ENCODE measurements at regions of chr5 and their contacts with region 1.

Region 1: GRCh38 chr5:36739751-36740221 is 133.4 kb downstream of the SLC1A3 start:
- DNase-seq: peak; percentile 85
- H3K4me3 ChIP-seq: no peak overlapping the region
- H3K27ac ChIP-seq: peak overlapping the region in 4 of 5 donors; percentile 12 to 70 (median 56)
- H3K4me1 ChIP-seq: peaks cover 6 to 47% (median 35%) of the 10 kb centered on the region in 4 donors
- H3K27me3 ChIP-seq: peaks cover 0 to 6% (median 0%) of the 10 kb centered on the region in 3 donors
- CTCF ChIP-seq: peak in 5 of 7 experiments; percentile 76 to 86 (median 85)
- EP300 ChIP-seq: no peak
- POLR2A ChIP-seq: no peak

Region 2: GRCh38 chr5:36599986-36600779 is 139.6 kb before region 1 on chr5:
- intact Hi-C with region 1: no loop called
- DNase-seq: no peak
- H3K4me3 ChIP-seq: no peak overlapping the region
- H3K27ac ChIP-seq: no peak overlapping the region
- H3K4me1 ChIP-seq: no peaks in the 10 kb centered on the region
- H3K27me3 ChIP-seq: no peaks in the 10 kb centered on the region
- CTCF ChIP-seq: no peak
- EP300 ChIP-seq: no peak
- POLR2A ChIP-seq: no peak

Region 3: GRCh38 chr5:36866174-36866573 is 126.4 kb after region 1 on chr5:
- intact Hi-C with region 1: loop called (anchors 10 kb)
- DNase-seq: no peak
- H3K4me3 ChIP-seq: no peak overlapping the region
- H3K27ac ChIP-seq: no peak overlapping the region
- H3K4me1 ChIP-seq: peaks cover 0 to 16% (median 6%) of the 10 kb centered on the region in 4 donors
- H3K27me3 ChIP-seq: no peaks in the 10 kb centered on the region
- CTCF ChIP-seq: no peak
- EP300 ChIP-seq: no peak
- POLR2A ChIP-seq: no peak

Measured in stomach (tissue), 19 donors.